ENCODE measurements at regions of chr3 and their contacts with region 1.

Region 1: DNA sequence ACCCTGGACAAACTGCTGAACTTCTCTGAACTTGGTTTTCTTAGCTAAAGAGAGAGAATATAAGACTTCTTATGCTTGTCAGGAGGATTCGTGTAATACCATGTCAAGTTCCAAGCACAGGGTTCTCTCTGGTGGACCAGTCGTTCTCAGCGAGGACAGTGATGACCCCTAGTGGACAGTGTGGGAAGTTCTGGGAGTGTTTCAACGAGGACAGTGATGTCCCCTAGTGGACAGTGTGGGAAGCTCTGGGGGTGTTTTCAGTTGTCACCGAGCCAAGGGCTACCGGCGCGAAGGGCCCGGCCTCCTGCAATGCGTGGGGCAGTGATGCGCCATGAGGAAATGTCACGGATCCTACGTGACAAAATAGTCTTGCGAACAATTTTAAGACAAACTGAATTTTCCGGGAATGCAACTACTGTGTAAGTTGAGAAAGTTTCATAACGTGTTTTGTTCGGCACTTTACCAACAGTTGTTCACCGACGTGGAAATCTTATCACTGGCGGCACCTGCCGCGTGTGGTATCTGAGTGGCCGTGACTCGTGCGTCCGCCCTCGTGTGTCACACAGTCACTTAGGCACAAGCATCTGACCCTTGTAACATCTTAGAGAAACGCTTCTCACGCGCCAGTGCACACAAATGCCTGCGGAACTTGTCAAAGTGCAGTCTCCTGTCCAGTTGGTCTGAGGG is 39.3 kb upstream of the MUC4 start:
- DNase-seq: peak; percentile 70 to 92
- H3K4me3 ChIP-seq: no peak overlapping the region
- H3K27ac ChIP-seq: no peak overlapping the region
- H3K4me1 ChIP-seq: no peaks in the 10 kb centered on the region; a peak in 1 of 7 replicates
- H3K27me3 ChIP-seq: no peaks in the 10 kb centered on the region
- CTCF ChIP-seq: peak; percentile 100
- EP300 ChIP-seq: no peak
- POLR2A ChIP-seq: no peak
- RAD21 ChIP-seq: peak; percentile 99 to 100

Region 2: DNA sequence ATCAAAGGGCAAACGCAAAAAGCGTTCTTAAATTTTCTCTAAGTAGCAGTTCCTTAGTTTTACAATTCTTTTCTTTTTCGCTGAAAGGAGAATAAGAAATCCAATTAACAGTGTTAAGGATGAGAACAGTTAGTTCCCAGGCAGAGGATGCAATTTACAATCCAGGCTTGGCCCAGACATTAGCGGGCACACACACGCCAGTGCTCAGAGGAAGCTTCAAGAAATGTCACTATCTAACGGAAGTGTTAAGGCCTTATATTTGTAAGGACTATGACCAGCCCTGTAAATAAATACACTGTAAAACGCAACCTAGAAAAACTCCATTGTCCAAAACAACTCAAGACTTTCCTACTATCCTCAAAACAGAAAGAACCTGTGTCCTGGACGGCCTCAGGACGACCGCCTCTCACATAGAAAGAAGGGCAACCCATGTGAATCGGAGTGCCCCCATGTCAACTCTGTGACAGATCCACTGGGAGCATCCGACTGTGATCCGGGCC is 409.5 kb before region 1 on chr3:
- CTCF ChIA-PET with region 1: no interaction called
- POLR2A ChIA-PET with region 1: no interaction called
- DNase-seq: no peak
- H3K4me3 ChIP-seq: peak overlapping the region; percentile 75 to 89 (median 88)
- H3K27ac ChIP-seq: no peak overlapping the region
- H3K4me1 ChIP-seq: peaks cover 5 to 16% (median 8%) of the 10 kb centered on the region in 4 experiments; a peak in 5 of 7 replicates
- H3K27me3 ChIP-seq: no peaks in the 10 kb centered on the region
- CTCF ChIP-seq: no peak
- EP300 ChIP-seq: no peak
- POLR2A ChIP-seq: no peak
- RAD21 ChIP-seq: no peak

Region 3: GRCh38 chr3:195738274-195739044 is 112.5 kb before region 1 on chr3:
- CTCF ChIA-PET with region 1: interaction called, 21 read pairs
- POLR2A ChIA-PET with region 1: no interaction called
- DNase-seq: no peak
- H3K4me3 ChIP-seq: no peak overlapping the region
- H3K27ac ChIP-seq: no peak overlapping the region
- H3K4me1 ChIP-seq: no peaks in the 10 kb centered on the region; a peak in 1 of 7 replicates
- H3K27me3 ChIP-seq: peaks cover 0 to 3% (median 0%) of the 10 kb centered on the region in 4 experiments; a peak in 1 of 7 replicates
- CTCF ChIP-seq: peak in 2 of 3 experiments; percentile 9 to 15; a peak in 2 of 4 replicates
- EP300 ChIP-seq: no peak
- POLR2A ChIP-seq: no peak
- RAD21 ChIP-seq: no peak; a peak in 1 of 4 replicates

Region 4: GRCh38 chr3:195768831-195769303 is 82.1 kb before region 1 on chr3:
- CTCF ChIA-PET with region 1: interaction called, 33 read pairs
- POLR2A ChIA-PET with region 1: interaction called, 3 read pairs
- DNase-seq: no peak
- H3K4me3 ChIP-seq: no peak overlapping the region
- H3K27ac ChIP-seq: no peak overlapping the region
- H3K4me1 ChIP-seq: no peaks in the 10 kb centered on the region
- H3K27me3 ChIP-seq: no peaks in the 10 kb centered on the region; a peak in 2 of 7 replicates
- CTCF ChIP-seq: no peak
- EP300 ChIP-seq: no peak
- POLR2A ChIP-seq: no peak
- RAD21 ChIP-seq: no peak

Region 5: GRCh38 chr3:195823280-195823679 is 27.7 kb before region 1 on chr3:
- CTCF ChIA-PET with region 1: interaction called, 18 read pairs
- POLR2A ChIA-PET with region 1: no interaction called
- DNase-seq: no peak
- H3K4me3 ChIP-seq: no peak overlapping the region
- H3K27ac ChIP-seq: no peak overlapping the region
- H3K4me1 ChIP-seq: no peaks in the 10 kb centered on the region; a peak in 1 of 7 replicates
- H3K27me3 ChIP-seq: no peaks in the 10 kb centered on the region
- CTCF ChIP-seq: no peak
- EP300 ChIP-seq: no peak
- POLR2A ChIP-seq: no peak
- RAD21 ChIP-seq: no peak

Region 6: DNA sequence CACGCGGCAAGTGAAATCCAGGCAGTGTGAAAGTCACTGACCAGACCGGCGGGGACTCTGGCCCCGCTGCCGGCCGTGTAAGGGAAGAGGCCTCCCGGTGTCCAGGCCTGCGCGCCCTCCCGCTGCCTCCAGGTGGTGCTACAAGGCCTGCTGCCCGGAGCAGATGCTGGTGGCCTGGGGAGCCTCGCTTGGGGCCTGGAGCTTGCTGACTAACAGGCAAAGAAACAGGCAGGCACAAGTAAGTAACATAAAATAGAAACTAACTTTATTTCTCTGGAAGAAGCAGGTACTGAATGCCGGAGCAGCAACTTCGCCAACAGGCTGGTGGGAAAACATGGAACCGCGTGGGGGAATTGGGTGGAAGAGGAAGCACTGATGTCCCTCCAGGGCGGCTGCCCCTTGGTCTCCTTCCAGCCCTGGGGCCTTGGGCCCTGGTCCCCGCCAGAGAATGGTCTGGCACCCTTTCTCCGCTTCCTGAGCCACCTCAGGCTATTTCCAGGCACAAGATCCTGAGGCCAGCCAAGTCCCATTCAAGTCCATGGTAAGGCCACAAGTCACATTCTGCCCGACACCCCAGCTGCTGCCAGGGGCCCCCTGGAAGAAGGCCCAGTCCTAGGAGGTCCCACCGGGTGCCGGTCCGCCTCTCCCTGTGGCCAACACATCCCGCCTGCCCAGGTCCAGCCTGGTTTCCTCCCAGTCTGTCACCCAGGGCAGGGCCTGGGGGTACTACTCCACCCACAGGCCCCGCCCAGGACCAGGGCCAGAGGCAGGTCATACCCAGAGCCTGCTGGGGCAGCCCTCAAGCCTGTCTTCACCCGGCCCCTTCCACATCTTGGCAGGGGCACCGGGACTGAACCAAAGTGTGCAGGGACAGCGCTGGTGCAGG is 12.4 kb after region 1 on chr3:
- CTCF ChIA-PET with region 1: interaction called, 17 read pairs
- POLR2A ChIA-PET with region 1: interaction called, 3 read pairs
- DNase-seq: peak; percentile 63 to 92
- H3K4me3 ChIP-seq: no peak overlapping the region
- H3K27ac ChIP-seq: no peak overlapping the region
- H3K4me1 ChIP-seq: no peaks in the 10 kb centered on the region; a peak in 2 of 7 replicates
- H3K27me3 ChIP-seq: no peaks in the 10 kb centered on the region; a peak in 1 of 7 replicates
- CTCF ChIP-seq: peak in 2 of 3 experiments; percentile 89 to 96; a peak in 3 of 4 replicates
- EP300 ChIP-seq: no peak
- POLR2A ChIP-seq: no peak
- RAD21 ChIP-seq: peak; percentile 88 to 92

Region 7: DNA sequence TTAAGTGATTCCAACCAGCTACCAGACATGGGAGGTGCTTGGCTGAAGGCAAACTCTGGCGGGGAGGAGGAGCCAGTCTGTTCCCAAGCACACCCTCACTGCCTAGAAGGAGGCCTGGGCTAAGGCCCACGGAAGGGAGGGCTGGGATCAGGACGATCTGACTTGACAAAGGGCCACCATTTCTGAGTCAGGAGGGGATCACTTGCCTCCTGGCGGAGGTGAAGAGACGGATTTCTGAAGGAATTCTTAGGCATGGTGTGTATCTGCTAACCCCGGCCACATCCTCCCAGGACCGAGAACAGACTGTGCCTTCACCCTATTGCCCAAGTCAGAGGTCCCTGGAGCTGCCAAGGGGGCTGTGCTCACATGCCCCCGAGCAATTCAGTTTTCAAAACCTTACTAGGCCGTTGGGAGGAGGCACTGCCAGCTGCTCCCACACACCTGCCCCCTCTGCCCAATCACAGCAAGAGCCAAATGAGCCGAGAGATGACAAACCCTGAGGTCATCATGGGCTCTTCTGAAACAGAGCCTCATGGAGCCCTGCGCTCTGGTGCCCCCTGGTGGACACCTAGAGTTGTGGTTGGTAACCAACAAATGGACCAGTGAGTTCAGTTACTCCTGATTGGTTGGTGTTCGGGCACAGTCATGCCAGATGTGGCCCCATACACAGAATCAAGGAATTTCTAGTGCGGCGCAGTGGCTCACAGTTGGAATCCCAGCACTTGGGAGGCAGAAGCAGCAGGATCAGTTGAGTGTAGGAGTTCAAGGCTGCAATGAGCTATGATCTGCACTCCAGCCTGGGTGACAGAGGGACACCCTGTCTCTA is 63.9 kb after region 1 on chr3:
- CTCF ChIA-PET with region 1: interaction called, 12 read pairs
- POLR2A ChIA-PET with region 1: no interaction called
- DNase-seq: peak; percentile 97
- H3K4me3 ChIP-seq: peak overlapping the region in 2 of 4 experiments; percentile 14 to 31; a peak in 2 of 8 replicates
- H3K27ac ChIP-seq: peak overlapping the region; percentile 57
- H3K4me1 ChIP-seq: peaks cover 7 to 13% (median 11%) of the 10 kb centered on the region in 4 experiments
- H3K27me3 ChIP-seq: peaks cover 0 to 6% (median 4%) of the 10 kb centered on the region in 4 experiments; a peak in 4 of 7 replicates
- CTCF ChIP-seq: peak in 2 of 3 experiments; percentile 93 to 99; a peak in 3 of 4 replicates
- EP300 ChIP-seq: no peak
- POLR2A ChIP-seq: peak in 1 of 2 experiments; percentile 70; a peak in 1 of 3 replicates
- RAD21 ChIP-seq: peak; percentile 80 to 88

Measured in H1 (cell line).